Activated T-helper 1 cell treated with anti-CD3 and anti-CD28 coated beads, Interleukin-12 subunit alpha, Interleukin-12 subunit beta, Interleukin-2, Interleukin-4 antibody, amounts not matched to agents 30 ng/mL and 10 ng/mL and 1 ng/mL, durations not matched to agents 14 hours and 24 hours and 36 hours (primary cell): ENCODE measurements at regions of chr21 and their contacts with region 1.

Region 1: DNA sequence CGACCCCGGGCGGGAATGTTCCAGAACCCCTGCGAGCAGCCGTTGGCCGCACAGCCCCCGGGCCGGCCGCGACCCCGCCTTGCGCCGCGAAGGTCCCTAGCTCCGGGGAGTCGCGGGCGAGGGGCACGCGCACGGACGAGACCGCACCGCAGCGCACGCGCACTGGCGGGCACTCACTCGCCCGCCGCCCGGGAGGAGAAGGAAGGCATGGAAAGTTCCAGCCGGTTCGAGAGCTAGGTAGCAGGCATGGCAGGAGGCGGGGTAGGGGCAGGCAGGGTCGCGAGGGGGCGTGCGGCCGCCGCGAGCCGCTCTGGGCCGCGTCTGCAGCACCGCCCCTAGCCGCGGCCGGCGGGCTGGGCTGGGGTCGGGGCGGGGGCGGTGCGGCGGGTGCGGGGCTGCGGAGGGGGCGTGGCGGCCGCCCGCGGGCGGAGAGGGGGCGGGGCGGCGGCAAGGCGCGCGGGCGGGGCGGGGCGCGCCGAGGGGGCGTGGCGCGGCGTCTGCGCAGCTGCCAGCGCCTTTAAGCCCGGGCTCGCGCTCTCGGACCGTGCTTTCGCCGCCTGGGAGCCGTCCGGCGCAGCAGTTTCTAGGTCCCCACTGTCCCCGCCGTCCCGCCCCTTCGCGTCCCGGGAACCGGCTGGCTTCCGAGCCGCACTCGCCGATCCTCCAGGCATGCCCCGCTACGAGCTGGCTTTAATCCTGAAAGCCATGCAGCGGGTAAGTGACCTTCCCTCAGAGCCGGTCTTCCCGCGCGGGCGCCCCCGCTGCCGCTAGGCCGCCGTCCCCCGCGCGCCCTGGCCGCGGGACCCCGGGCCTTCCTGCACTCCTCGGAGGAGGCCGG is at the starts of genes MRPS6 and SLC5A3:
- DNase-seq: peak; percentile 67
- H3K4me3 Mint-ChIP-seq: peak within 1 kb of the TSS; percentile 96
- H3K27ac Mint-ChIP-seq: peak within 1 kb of the TSS; percentile 90
- H3K4me1 Mint-ChIP-seq: peaks cover 44% of the 10 kb centered on the region
- H3K27me3 Mint-ChIP-seq: peaks cover 4% of the 10 kb centered on the region
- total RNA-seq, gene MRPS6: 137 and 139 TPM in 2 replicates
- total RNA-seq, gene SLC5A3: 45.4 and 48.0 TPM in 2 replicates

Region 2: DNA sequence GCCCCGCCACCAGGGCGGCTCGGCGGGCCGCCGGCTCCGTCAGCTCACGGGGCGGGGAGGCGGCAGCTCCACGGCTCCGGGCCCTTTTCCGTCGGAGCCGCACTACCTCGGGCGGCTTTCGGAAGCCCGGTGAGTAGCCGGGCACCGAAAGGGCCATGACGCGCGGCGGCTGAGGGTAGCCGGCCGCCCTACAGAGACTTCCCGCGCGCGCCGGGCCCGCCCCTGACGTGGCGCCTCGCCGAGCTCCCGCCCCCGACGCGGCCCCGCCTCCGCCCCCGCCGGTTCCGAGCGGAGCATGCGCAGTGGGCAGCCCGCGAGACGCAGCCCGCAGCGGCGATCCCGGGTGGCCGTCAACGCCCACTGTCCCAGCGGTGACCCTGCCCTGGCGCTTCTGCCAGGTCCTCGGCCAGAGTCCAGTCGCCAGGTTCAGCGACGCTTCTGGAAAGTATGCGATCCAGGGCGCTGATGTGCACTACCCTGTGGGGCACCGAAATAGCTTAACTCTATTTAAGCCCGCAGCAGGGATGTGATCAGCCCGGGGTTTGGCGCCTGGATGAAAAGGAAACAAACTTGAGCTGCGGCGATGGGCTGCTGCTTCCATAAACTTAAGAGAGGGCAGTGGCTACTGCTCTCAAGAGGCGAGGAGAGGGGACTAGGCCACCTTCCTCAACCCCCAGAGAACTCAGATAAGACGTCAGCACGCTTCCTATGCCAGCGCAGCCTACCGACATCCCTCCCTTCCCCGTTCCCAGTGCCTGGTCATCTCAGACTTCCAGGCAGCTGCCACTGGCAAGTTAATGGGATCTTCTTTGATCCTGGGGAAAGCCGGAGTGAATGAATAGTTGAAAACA is 484.5 kb before region 1 on chr21 and contains the start of gene DONSON:
- intact Hi-C with region 1: loop called (anchors 5 kb)
- DNase-seq: peak; percentile 90
- H3K4me3 Mint-ChIP-seq: peak within 1 kb of the TSS; percentile 92
- H3K27ac Mint-ChIP-seq: peak within 1 kb of the TSS; percentile 84
- H3K4me1 Mint-ChIP-seq: peaks cover 31% of the 10 kb centered on the region
- H3K27me3 Mint-ChIP-seq: no peaks in the 10 kb centered on the region
- total RNA-seq, gene DONSON: 37.5 and 38.7 TPM in 2 replicates

Region 3: GRCh38 chr21:33924079-33924765 is 149.0 kb before region 1 on chr21:
- intact Hi-C with region 1: loop called (anchors 2 kb)
- DNase-seq: peak; percentile 79
- H3K4me3 Mint-ChIP-seq: no peak overlapping the region
- H3K27ac Mint-ChIP-seq: no peak overlapping the region
- H3K4me1 Mint-ChIP-seq: peaks cover 27% of the 10 kb centered on the region
- H3K27me3 Mint-ChIP-seq: peaks cover 3% of the 10 kb centered on the region

Region 4: DNA sequence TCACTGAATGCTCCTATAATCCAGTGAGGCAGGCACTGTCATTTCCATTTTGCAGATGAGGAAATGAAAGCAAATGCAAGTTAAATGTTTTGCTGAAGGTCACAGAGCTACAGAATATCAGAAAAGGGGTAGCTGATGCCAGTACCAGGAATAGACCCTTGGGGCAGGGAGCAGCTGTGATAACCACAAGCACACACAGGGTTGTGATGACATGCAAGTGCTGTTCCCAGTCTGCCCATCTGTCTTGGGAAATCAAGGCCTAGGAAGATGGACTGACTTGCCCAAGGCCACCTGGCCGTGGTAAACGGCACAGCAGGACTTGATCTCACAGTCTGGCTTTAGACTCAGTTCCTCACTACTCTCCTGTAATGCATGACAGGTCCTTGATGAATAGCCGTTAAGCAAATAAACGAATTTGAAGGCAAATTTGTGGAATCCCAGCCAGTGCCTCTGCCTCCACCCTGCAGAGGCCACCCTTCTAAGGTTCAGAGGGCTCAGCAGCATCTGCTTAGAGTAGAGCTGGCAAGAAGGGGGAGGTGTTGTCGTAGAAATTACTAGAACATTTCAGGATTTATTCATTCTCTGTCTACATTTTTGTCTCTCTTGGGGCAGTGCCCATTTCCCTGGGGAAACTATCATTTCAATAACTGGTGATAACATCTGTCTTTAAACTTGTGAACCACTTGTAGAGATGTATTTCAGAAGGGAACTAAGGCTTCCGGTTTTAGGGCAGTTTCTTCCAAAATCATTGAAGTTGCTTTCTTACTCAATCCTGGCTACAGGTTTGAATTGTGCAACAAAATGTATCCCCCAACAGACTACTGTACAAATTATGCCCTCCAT is 53.0 kb before region 1 on chr21:
- intact Hi-C with region 1: loop called (anchors 2 kb)
- DNase-seq: no peak
- H3K4me3 Mint-ChIP-seq: peak overlapping the region; percentile 38
- H3K27ac Mint-ChIP-seq: peak overlapping the region; percentile 59
- H3K4me1 Mint-ChIP-seq: peaks cover 26% of the 10 kb centered on the region
- H3K27me3 Mint-ChIP-seq: no peaks in the 10 kb centered on the region

Region 5: DNA sequence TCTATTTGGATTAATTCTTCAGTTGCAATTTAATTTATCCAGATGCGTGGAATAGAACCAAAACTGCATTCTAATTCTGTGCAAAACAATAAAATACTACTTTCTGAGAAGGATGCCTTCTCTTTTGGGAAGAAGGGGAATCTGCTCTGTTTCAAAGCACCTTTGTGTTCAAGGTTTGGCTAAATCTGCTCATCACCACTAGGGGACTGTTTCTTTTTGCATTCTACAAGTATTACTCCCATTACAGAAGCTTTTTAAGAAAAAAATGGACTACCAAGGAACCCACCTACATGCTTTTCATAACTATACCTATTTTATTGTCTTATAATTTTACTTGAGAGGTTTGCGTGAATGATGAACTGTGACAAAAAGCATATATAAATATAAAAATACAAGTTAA is 18.4 kb after region 1 on chr21:
- intact Hi-C with region 1: loop called (anchors 1 kb)
- DNase-seq: no peak
- H3K4me3 Mint-ChIP-seq: no peak overlapping the region
- H3K27ac Mint-ChIP-seq: no peak overlapping the region
- H3K4me1 Mint-ChIP-seq: peaks cover 39% of the 10 kb centered on the region
- H3K27me3 Mint-ChIP-seq: no peaks in the 10 kb centered on the region